A673 (cell line): ENCODE measurements at regions of chr10 and their contacts with region 1.

Region 1: GRCh38 chr10:6920072-6921019 is 340.3 kb upstream of the PRKCQ start:
- DNase-seq: peak; percentile 84
- H3K4me3 ChIP-seq: no peak overlapping the region
- H3K27ac ChIP-seq: no peak overlapping the region
- H3K4me1 ChIP-seq: no peaks in the 10 kb centered on the region
- H3K27me3 ChIP-seq: peaks cover 4% of the 10 kb centered on the region
- CTCF ChIP-seq: peak; percentile 82

Region 2: DNA sequence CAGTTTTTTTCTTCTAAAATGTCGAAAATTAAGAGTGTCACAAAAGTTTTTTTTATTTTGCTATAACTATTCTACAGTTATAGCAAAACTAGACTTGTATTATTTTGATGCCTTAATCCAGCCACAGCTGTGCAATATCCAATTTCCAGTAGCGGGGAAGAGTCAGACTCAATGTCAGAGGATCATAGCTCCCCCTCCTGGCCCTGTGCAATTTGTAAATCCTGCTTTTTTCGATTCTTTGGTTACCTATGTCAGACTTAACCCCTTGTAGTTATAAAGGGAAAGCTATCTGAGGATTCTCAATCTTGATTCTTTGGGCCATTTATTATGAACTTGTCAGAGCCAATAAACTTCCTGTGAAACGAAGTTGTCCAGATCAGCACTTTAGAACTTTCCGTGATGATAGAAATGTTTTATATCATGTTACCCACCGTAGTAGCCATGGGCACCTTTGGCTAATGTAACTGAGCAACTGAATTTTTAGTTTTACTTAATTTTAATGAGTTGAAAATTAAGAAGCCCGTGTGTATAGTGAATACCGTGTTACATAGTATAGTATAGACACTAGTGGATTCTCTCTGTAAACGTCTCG is 252.6 kb before region 1 on chr10:
- CTCF ChIA-PET with region 1: no interaction called
- POLR2A ChIA-PET with region 1: no interaction called
- intact Hi-C with region 1: no loop called
- DNase-seq: peak; percentile 61
- H3K4me3 ChIP-seq: no peak overlapping the region
- H3K27ac ChIP-seq: no peak overlapping the region
- H3K4me1 ChIP-seq: no peaks in the 10 kb centered on the region
- H3K27me3 ChIP-seq: peaks cover 30% of the 10 kb centered on the region
- CTCF ChIP-seq: peak; percentile 77

Region 3: DNA sequence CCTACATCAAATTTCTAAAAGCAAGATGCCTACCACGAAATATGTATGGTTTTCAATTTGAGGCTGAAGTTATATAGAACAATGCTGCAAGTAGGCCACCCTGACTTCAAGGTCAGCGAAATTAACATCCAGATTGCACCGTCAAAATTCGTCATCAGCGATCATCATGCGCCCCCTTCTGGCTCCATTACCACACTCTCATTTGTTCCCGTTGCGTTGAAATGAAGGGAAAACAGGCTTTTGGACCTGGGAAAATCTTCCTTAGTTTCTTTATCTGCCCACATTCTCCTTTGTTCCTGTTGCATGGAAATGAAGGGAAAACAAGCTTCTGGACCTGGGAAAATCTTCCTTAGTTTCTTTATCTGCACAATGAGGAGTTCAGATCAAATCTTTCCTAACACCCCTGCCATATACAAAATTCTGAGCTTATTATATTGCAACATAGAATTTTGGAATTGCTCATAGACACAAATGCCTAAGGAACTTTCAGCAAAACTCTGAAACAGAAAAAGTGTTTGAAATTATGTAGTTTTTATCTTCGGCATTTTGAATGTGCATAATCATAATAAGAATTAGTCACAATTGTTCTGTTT is 242.0 kb before region 1 on chr10:
- CTCF ChIA-PET with region 1: no interaction called
- POLR2A ChIA-PET with region 1: no interaction called
- intact Hi-C with region 1: loop called (anchors 5 kb)
- DNase-seq: peak; percentile 67
- H3K4me3 ChIP-seq: no peak overlapping the region
- H3K27ac ChIP-seq: no peak overlapping the region
- H3K4me1 ChIP-seq: no peaks in the 10 kb centered on the region
- H3K27me3 ChIP-seq: peaks cover 48% of the 10 kb centered on the region
- CTCF ChIP-seq: peak; percentile 88

Region 4: GRCh38 chr10:6748978-6749635 is 171.2 kb before region 1 on chr10:
- CTCF ChIA-PET with region 1: no interaction called
- POLR2A ChIA-PET with region 1: no interaction called
- intact Hi-C with region 1: loop called (anchors 10 kb)
- DNase-seq: peak; percentile 96
- H3K4me3 ChIP-seq: no peak overlapping the region
- H3K27ac ChIP-seq: peak overlapping the region; percentile 85
- H3K4me1 ChIP-seq: peaks cover 52% of the 10 kb centered on the region
- H3K27me3 ChIP-seq: no peaks in the 10 kb centered on the region
- CTCF ChIP-seq: no peak

Region 5: DNA sequence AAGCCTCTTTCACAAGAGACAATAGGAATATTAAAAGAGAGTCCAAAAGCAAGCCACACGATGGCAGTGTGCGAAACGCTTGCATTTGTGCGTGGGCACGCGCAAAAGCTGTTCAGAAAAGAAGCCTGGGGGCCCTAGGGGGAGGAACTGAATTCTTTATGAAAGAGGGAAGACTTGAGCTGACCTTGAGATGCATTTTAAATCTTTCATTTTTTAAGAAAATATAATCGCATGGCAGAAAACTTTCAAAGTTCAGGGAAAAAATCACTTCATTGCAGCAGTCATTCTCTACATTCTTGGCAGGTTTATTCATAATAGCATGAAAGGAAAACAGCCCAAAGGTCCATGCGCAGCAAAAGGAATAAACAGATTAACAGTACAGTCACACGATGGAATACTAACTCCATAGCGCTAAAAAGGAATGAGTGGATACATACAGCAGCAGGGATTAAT is 133.7 kb before region 1 on chr10:
- CTCF ChIA-PET with region 1: no interaction called
- POLR2A ChIA-PET with region 1: no interaction called
- intact Hi-C with region 1: loop called (anchors 10 kb)
- DNase-seq: peak; percentile 81
- H3K4me3 ChIP-seq: no peak overlapping the region
- H3K27ac ChIP-seq: no peak overlapping the region
- H3K4me1 ChIP-seq: peaks cover 44% of the 10 kb centered on the region
- H3K27me3 ChIP-seq: no peaks in the 10 kb centered on the region
- CTCF ChIP-seq: peak; percentile 82

Region 6: GRCh38 chr10:7111561-7111960 is 191.2 kb after region 1 on chr10:
- CTCF ChIA-PET with region 1: no interaction called
- POLR2A ChIA-PET with region 1: no interaction called
- intact Hi-C with region 1: loop called (anchors 10 kb)
- DNase-seq: no peak
- H3K4me3 ChIP-seq: no peak overlapping the region
- H3K27ac ChIP-seq: no peak overlapping the region
- H3K4me1 ChIP-seq: no peaks in the 10 kb centered on the region
- H3K27me3 ChIP-seq: peaks cover 33% of the 10 kb centered on the region
- CTCF ChIP-seq: no peak

Region 7: DNA sequence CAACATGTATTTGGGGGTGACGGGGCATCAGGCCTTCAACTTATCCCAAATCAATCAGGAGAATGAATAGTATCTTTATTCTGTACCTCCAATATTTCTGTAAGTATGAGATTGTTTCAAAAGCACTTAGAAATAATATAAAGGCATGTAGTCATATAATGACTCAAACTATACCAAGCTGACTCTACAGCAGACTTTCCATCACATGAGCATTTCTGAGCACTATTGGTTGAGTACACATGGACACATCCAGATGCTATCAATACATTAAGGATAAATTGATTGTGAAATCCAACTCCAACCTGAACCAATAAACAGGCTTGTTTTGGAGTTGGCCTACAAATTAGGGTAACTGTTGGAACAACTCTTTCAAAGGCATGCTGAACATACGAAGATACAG is 261.1 kb after region 1 on chr10:
- CTCF ChIA-PET with region 1: no interaction called
- POLR2A ChIA-PET with region 1: no interaction called
- intact Hi-C with region 1: no loop called
- DNase-seq: no peak
- H3K4me3 ChIP-seq: no peak overlapping the region
- H3K27ac ChIP-seq: no peak overlapping the region
- H3K4me1 ChIP-seq: no peaks in the 10 kb centered on the region
- H3K27me3 ChIP-seq: peaks cover 8% of the 10 kb centered on the region
- CTCF ChIP-seq: no peak